Activated naive CD4-positive, alpha-beta T cell treated with anti-CD3 and anti-CD28 coated beads for 36 hours (primary cell): ENCODE measurements at regions of chr11 and their contacts with region 1.

Region 1: DNA sequence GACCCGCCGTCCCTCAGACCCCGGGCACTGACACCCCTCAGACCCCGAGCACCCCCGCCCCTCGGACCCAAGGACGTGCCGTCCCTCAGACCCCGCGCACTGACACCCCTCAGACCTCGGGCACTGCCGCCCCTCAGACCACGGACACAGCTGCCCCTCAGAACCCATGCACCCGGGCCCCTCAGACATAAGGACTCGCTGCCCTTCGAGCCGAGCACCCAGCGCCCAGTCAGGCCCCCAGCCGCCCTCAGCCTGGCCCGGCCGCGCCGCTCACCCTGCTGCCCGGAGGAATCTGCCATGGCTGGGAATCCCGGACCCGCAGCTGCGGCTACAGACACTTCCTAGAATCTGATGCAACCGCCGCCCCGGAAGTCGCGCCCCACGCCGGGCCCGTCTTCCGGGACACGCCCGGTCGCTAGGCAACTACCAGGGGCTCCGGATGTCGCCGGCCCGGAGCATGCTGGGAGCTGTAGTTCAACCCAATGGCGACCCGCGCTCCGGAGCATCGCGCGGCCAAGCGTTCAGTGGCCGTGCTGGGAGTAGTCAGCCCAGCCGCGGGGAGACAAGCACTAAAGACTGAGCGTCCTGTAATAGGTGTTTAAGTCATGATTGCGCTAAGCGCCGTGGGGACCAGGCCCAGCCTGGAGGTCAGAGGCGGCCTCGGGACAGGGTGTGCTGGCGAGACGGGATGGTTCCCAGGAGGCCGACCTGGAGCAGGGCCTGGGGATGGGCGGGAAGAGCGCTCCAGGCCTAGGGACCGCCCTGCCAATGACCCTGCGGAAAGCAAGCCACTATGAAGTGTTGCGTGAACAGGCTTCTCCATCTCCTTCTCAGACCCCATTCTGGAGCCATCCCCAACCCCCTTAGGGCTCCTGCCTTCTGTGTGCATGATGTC is at the start of gene CARS1:
- DNase-seq: peak; percentile 96
- H3K4me3 Mint-ChIP-seq: peak within 1 kb of the TSS; percentile 92
- H3K27ac Mint-ChIP-seq: peak within 1 kb of the TSS; percentile 80
- H3K4me1 Mint-ChIP-seq: peaks cover 38% of the 10 kb centered on the region
- H3K27me3 Mint-ChIP-seq: no peaks in the 10 kb centered on the region
- total RNA-seq, gene CARS1: 126 to 128 TPM

Region 2: DNA sequence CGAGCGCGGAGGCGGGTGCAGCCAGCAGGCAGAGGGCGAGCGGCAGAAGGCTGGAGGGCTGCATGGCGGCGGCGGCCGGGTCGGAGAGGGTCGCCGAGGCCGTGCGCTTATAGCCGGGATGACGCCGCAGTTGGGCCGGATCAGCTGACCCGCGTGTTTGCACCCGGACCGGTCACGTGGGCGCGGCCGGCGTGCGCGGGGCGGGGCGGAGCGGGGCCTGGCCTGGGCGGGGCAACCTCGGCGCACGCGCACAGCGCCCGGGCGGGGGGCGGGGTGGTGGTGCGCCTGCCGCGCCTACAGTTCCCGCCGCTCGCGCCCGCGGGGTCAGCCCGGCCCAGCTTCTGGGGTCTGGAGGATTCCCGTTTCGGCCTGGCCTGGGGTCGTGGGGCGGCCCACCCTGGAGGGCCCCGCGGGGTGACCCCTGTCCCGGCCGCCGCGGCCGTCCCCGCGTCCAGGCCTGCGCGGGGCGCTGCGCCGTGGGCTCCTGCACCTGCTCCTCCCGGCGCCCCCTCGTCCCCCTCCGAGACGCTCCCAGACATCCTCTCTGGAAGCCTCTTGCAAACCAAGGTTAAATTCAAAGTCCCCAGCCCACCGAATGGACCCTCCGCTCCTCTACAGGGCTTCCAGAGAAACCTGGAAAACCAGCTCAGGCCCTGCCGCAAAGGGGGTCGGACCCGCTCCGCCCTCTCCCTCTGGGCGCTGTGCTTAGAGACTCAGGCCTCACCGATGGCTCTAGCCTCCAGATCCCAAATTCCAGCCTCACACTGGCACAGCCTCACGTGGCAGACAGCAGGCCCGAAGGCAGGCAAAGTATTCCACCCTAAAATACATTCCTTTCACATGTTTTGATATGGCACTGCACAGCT is 1293.3 kb before region 1 on chr11 and contains the start of gene CTSD:
- CTCF ChIA-PET with region 1: no interaction called
- intact Hi-C with region 1: loop called (anchors 5 kb)
- DNase-seq: peak; percentile 88
- H3K4me3 Mint-ChIP-seq: peak within 1 kb of the TSS; percentile 86
- H3K27ac Mint-ChIP-seq: peak within 1 kb of the TSS; percentile 65
- H3K4me1 Mint-ChIP-seq: peaks cover 27% of the 10 kb centered on the region
- H3K27me3 Mint-ChIP-seq: no peaks in the 10 kb centered on the region
- total RNA-seq, gene CTSD: 30.1 to 34.5 TPM

Region 3: GRCh38 chr11:2799881-2800654 is 257.2 kb before region 1 on chr11:
- CTCF ChIA-PET with region 1: no interaction called
- intact Hi-C with region 1: no loop called
- DNase-seq: peak; percentile 0
- H3K4me3 Mint-ChIP-seq: no peak overlapping the region
- H3K27ac Mint-ChIP-seq: no peak overlapping the region
- H3K4me1 Mint-ChIP-seq: no peaks in the 10 kb centered on the region
- H3K27me3 Mint-ChIP-seq: no peaks in the 10 kb centered on the region

Region 4: DNA sequence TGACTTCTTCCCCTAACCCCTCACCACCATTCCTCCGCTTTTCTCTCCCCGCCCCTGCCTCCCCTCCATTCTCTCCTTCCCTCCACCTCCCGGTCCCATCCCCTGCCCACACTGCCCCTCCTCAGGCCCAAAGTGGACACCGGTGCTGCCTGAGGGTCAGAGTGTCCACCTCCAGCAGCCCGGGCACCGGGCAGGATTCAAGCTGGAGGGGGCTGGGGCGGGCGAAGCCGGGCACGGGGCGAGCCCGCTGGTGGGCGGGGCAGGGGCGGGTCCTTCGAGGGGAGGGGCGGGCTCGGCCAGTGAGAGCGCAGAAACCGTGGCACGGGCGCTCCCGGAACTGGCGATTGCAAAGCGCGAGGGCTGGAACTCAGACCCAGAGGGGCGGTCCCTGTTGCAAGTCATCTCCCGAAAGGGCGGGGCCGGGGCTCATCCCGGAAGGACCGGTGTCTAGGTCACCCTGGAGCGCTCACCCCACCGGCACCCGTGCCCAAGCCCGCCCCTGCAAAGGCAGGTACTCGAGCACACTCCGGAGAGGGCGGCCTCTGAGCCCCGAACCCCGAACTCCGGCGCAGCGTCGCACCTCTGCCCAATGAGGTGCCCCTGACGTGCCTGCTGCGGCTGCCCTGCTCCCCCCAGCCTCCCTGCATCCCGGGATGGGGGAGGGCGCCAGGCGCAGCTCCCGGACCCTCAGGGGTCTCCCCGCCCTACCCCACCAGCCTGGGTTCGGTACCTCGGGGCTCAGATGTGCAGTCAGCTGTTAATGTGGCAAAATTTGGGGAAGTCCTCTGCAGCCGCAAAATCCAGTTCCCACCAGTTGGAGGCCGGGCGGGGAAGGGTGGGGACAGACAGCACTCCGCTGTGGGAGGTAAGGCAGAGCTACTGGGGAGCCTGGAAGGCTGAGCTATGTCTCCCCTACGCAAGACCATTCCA is 155.2 kb before region 1 on chr11:
- CTCF ChIA-PET with region 1: no interaction called
- intact Hi-C with region 1: loop called (anchors 5 kb)
- DNase-seq: peak; percentile 98
- H3K4me3 Mint-ChIP-seq: peak overlapping the region; percentile 72
- H3K27ac Mint-ChIP-seq: peak overlapping the region; percentile 41
- H3K4me1 Mint-ChIP-seq: peaks cover 33% of the 10 kb centered on the region
- H3K27me3 Mint-ChIP-seq: no peaks in the 10 kb centered on the region

Region 5: DNA sequence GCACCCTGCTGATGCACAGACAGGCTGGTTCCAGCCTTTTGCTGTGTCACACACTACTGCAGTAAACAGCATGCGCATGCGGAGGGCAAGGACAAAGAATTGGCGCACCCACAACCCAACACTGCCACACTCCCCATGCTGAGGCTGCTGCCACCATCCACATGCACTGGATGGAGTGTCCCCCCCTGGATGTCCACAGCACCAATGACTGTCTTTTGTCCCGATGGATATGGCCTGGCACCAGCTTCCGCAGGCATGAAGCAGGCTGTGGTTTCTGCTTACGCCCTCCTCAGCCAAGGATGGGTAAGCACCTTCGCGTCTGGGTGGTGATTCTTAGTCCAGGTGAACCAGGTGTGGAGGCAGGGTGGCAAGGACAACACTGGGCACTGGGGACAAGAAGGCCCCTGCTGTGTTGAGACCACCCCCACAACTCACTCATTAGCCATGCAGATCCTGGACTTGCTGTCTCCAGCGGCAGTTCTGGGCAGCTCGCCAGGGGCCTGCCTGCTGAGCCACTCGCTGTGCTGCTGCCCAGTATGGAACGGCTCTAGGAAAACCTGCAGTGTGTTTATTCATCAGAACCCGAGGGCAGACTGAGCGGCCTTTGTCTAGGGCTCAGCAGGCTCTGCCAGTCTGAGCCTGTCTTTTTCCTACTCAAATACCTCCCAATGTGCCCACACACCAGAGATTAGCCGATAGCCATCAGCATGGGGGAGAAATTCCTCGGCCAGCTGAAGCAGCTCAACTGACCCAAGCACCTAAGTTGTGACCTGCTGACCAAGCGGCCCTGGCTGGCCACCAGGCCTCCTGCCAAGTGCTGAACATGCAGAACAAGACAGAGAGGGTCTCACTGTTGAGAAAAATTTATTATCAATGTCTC is 57.0 kb before region 1 on chr11:
- CTCF ChIA-PET with region 1: no interaction called
- intact Hi-C with region 1: no loop called
- DNase-seq: no peak
- H3K4me3 Mint-ChIP-seq: no peak overlapping the region
- H3K27ac Mint-ChIP-seq: no peak overlapping the region
- H3K4me1 Mint-ChIP-seq: no peaks in the 10 kb centered on the region
- H3K27me3 Mint-ChIP-seq: no peaks in the 10 kb centered on the region